Gastrocnemius medialis (tissue), 4 donors: ENCODE measurements at regions of chr15 and their contacts with region 1.

Region 1: GRCh38 chr15:91706322-91707032 is 147.0 kb upstream of the SLCO3A1 start:
- DNase-seq: peak; percentile 24 to 71
- ATAC-seq: peak; percentile 73 to 76
- H3K4me3 ChIP-seq: no peak overlapping the region
- H3K27ac ChIP-seq: no peak overlapping the region
- H3K4me1 ChIP-seq: peaks cover 0 to 4% of the 10 kb centered on the region in 2 donors
- H3K27me3 ChIP-seq: no peaks in the 10 kb centered on the region
- CTCF ChIP-seq: peak; percentile 60 to 82 (median 72)
- POLR2A ChIP-seq: no peak

Region 2: DNA sequence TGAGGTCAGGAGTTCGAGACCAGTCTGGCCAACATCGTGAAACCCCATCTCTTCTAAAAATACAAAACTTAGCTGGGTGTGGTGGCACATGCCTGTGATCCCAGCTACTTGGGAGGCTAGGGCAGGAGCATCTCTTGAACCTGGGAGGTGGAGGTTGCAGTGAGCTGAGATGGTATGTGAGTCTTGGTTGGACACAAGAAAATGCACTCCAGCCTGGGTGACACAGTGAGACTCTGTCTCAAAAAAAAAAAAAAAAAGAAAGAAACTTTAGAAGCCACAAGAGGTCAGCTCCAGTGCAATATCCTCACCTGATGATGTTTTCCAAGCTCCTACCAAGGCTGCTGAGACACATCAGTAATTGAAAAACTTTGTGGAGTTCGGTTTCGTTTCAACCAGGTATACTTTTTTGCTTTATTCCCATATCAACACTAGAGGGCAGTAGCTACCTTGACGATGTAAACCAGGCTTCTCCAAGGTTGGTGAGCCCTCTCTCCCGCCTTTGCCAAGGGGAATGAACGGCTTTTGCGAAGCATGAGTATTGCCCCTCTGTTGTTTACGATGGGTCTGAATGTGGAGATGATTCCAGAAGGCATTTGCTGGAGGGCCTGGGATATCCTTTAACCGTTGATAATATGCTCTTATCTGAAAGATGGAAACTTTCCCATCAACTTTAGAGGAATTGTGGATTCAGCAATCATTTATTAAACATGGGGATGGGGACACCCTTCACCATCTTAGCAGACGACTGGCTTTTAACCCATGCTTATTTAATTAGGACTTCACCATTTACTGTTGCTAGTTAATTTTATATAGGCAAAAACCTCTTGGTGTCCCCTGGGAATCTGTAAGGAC is 403.7 kb before region 1 on chr15:
- in situ Hi-C with region 1: no loop called
- intact Hi-C with region 1: loop called (anchors 1 kb)
- DNase-seq: peak in 1 of 2 donors; percentile 20
- ATAC-seq: peak; percentile 80 to 81
- H3K4me3 ChIP-seq: no peak overlapping the region
- H3K27ac ChIP-seq: no peak overlapping the region
- H3K4me1 ChIP-seq: peaks cover 0 to 3% of the 10 kb centered on the region in 2 donors
- H3K27me3 ChIP-seq: peaks cover 2 to 15% (median 6%) of the 10 kb centered on the region in 3 donors
- CTCF ChIP-seq: peak; percentile 55 to 79 (median 68)
- POLR2A ChIP-seq: no peak

Region 3: DNA sequence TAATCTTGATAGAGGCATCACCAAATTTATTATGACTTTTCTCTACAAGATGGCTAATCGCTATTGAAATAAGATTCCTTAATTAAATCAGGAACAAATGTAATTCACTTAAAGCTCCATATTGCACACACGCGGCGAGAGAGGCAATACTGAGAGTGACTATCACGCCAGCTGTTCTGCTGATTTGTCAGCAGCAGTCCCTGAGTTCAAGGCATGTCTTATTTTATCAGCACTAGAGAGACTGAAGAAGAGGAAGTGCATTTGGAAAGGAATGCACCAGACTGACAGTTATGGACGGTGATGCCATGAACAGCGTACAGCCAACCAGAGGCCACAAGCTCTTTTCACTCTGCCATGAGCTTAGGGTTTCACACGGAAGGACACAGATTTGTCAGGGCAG is 63.4 kb after region 1 on chr15:
- in situ Hi-C with region 1: loop called in 1 of 4 experiments (anchors 10 kb)
- intact Hi-C with region 1: no loop called
- DNase-seq: no peak
- ATAC-seq: no peak
- H3K4me3 ChIP-seq: no peak overlapping the region
- H3K27ac ChIP-seq: no peak overlapping the region
- H3K4me1 ChIP-seq: no peaks in the 10 kb centered on the region
- H3K27me3 ChIP-seq: no peaks in the 10 kb centered on the region
- CTCF ChIP-seq: no peak
- POLR2A ChIP-seq: no peak

Region 4: GRCh38 chr15:91942676-91943576 is 236.4 kb after region 1 on chr15:
- in situ Hi-C with region 1: loop called in 1 of 4 experiments (anchors 25 kb)
- intact Hi-C with region 1: loop called (anchors 10 kb)
- DNase-seq: peak; percentile 78 to 84
- ATAC-seq: peak; percentile 94 to 95
- H3K4me3 ChIP-seq: peak overlapping the region in 2 of 4 donors; percentile 25 to 34
- H3K27ac ChIP-seq: peak overlapping the region; percentile 43 to 60 (median 56)
- H3K4me1 ChIP-seq: peaks cover 35 to 55% of the 10 kb centered on the region in 2 donors
- H3K27me3 ChIP-seq: no peaks in the 10 kb centered on the region
- CTCF ChIP-seq: no peak
- POLR2A ChIP-seq: no peak